ENCODE measurements at regions of chr16 and their contacts with region 1.

Region 1: GRCh38 chr16:4402439-4403132 is 13.8 kb downstream of the CORO7 start:
- DNase-seq: peak; percentile 76 to 95 (median 84)
- ATAC-seq: peak; percentile 97
- H3K4me3 ChIP-seq: no peak overlapping the region
- H3K27ac ChIP-seq: no peak overlapping the region
- H3K4me1 ChIP-seq: peaks cover 0 to 17% of the 10 kb centered on the region in 2 donors
- H3K27me3 ChIP-seq: no peaks in the 10 kb centered on the region
- CTCF ChIP-seq: peak; percentile 92 to 95

Region 2: DNA sequence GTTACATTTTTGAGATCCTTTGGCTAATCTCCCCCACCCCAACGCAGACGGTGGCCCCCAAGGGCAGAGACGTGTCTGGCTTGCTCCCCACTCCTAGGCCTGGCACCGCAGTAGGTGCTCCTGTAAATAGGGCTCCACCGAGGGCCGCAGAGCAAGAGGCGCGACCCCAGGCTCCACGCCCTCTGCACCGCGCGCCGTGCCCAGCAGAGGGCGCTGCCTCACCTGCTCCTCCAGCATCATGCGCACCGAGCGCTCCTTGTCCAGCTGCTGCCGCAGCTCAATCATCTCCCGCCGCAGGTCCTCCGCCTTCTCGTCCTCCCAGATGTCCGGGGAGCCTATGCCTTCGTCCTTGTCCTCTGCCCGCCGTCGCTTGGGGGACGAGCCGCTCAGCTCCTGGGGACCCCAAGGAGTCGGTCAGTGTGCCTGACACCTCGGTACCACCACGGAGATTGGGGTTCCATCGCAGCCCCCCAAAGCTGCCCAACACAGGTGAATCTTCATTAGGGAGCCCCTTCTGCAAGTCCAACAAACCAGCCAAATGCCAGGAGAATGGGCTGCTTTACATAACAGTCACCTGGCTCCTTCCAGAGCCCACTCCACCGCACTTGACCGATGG is 140.9 kb before region 1 on chr16:
- intact Hi-C with region 1: no loop called
- DNase-seq: peak in 2 of 4 donors; percentile 49 to 85
- ATAC-seq: peak; percentile 32
- H3K4me3 ChIP-seq: no peak overlapping the region
- H3K27ac ChIP-seq: no peak overlapping the region
- H3K4me1 ChIP-seq: peaks cover 0 to 10% of the 10 kb centered on the region in 2 donors
- H3K27me3 ChIP-seq: no peaks in the 10 kb centered on the region
- CTCF ChIP-seq: peak; percentile 48 to 63

Region 3: GRCh38 chr16:4358831-4359561 is 43.6 kb before region 1 on chr16:
- intact Hi-C with region 1: loop called (anchors 2 to 5 kb)
- DNase-seq: peak in 2 of 4 donors; percentile 61 to 91
- ATAC-seq: peak; percentile 80
- H3K4me3 ChIP-seq: no peak overlapping the region
- H3K27ac ChIP-seq: no peak overlapping the region
- H3K4me1 ChIP-seq: no peaks in the 10 kb centered on the region
- H3K27me3 ChIP-seq: no peaks in the 10 kb centered on the region
- CTCF ChIP-seq: peak; percentile 88 to 96

Region 4: GRCh38 chr16:4384509-4384942 is 18.1 kb before region 1 on chr16:
- intact Hi-C with region 1: no loop called
- DNase-seq: no peak
- ATAC-seq: no peak
- H3K4me3 ChIP-seq: no peak overlapping the region
- H3K27ac ChIP-seq: peak overlapping the region in 1 of 2 donors; percentile 5
- H3K4me1 ChIP-seq: peaks cover 0 to 9% of the 10 kb centered on the region in 2 donors
- H3K27me3 ChIP-seq: no peaks in the 10 kb centered on the region
- CTCF ChIP-seq: no peak